ENCODE measurements at regions of chr11 and their contacts with region 1.

Region 1: GRCh38 chr11:47980245-47981049 is at the start of gene PTPRJ:
- DNase-seq: peak; percentile 65 to 68
- H3K4me3 ChIP-seq: peak within 1 kb of the TSS; percentile 66
- H3K4me3 Mint-ChIP-seq: peak within 1 kb of the TSS; percentile 63
- H3K27ac Mint-ChIP-seq: no peak within 1 kb of the TSS
- H3K4me1 ChIP-seq: peaks cover 19% of the 10 kb centered on the region
- H3K4me1 Mint-ChIP-seq: peaks cover 12% of the 10 kb centered on the region
- H3K27me3 ChIP-seq: no peaks in the 10 kb centered on the region
- H3K27me3 Mint-ChIP-seq: no peaks in the 10 kb centered on the region
- CTCF ChIP-seq: no peak
- total RNA-seq, gene PTPRJ: 9.7 and 11.0 TPM in 2 replicates

Region 2: GRCh38 chr11:47932544-47932943 is 47.9 kb before region 1 on chr11:
- CTCF ChIA-PET with region 1: interaction called, 3 read pairs
- POLR2A ChIA-PET with region 1: no interaction called
- intact Hi-C with region 1: loop called (anchors 2 kb)
- DNase-seq: no peak
- H3K4me3 ChIP-seq: no peak overlapping the region
- H3K4me3 Mint-ChIP-seq: no peak overlapping the region
- H3K27ac Mint-ChIP-seq: no peak overlapping the region
- H3K4me1 ChIP-seq: no peaks in the 10 kb centered on the region
- H3K4me1 Mint-ChIP-seq: no peaks in the 10 kb centered on the region
- H3K27me3 ChIP-seq: no peaks in the 10 kb centered on the region
- H3K27me3 Mint-ChIP-seq: no peaks in the 10 kb centered on the region
- CTCF ChIP-seq: no peak

Region 3: GRCh38 chr11:47955061-47955755 is 25.2 kb before region 1 on chr11:
- CTCF ChIA-PET with region 1: no interaction called
- POLR2A ChIA-PET with region 1: interaction called, 10 read pairs
- intact Hi-C with region 1: no loop called
- DNase-seq: no peak
- H3K4me3 ChIP-seq: no peak overlapping the region
- H3K4me3 Mint-ChIP-seq: no peak overlapping the region
- H3K27ac Mint-ChIP-seq: no peak overlapping the region
- H3K4me1 ChIP-seq: no peaks in the 10 kb centered on the region
- H3K4me1 Mint-ChIP-seq: no peaks in the 10 kb centered on the region
- H3K27me3 ChIP-seq: no peaks in the 10 kb centered on the region
- H3K27me3 Mint-ChIP-seq: no peaks in the 10 kb centered on the region
- CTCF ChIP-seq: no peak

Region 4: GRCh38 chr11:47967577-47968425 is 12.6 kb before region 1 on chr11:
- CTCF ChIA-PET with region 1: no interaction called
- POLR2A ChIA-PET with region 1: no interaction called
- intact Hi-C with region 1: no loop called
- DNase-seq: no peak
- H3K4me3 ChIP-seq: no peak overlapping the region
- H3K4me3 Mint-ChIP-seq: no peak overlapping the region
- H3K27ac Mint-ChIP-seq: no peak overlapping the region
- H3K4me1 ChIP-seq: no peaks in the 10 kb centered on the region
- H3K4me1 Mint-ChIP-seq: no peaks in the 10 kb centered on the region
- H3K27me3 ChIP-seq: no peaks in the 10 kb centered on the region; the same call in 1 of the 2 replicates
- H3K27me3 Mint-ChIP-seq: no peaks in the 10 kb centered on the region
- CTCF ChIP-seq: no peak

Region 5: DNA sequence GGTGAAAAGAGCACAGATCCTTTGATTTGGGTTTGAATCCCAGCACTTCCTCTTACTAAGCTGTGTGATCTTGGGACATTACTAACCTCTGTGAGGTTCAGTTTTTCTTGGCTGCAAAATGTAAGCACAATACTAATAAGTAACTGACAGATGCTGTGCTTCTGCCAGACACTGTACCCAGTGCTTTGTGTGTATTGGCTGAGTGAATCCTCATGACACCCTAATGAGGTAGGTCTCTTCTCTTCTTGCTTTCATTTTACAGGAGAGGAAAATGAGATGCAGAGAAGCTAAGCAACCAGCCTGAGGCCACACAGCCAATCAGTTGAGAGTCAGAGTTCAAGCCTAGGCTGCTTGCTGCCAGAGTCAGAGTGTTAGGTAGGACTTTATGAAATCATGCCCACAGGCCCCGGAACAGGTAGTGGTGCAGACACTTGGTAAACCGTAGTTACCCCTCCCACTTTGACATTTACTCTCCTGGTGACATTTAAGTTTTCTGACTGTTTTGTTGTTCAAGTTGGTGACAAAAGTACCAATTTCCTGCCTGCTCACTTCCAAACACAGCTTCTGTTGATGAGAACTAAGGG is 21.1 kb after region 1 on chr11:
- CTCF ChIA-PET with region 1: no interaction called
- POLR2A ChIA-PET with region 1: interaction called, 8 read pairs
- intact Hi-C with region 1: loop called (anchors 1 kb)
- DNase-seq: no peak
- H3K4me3 ChIP-seq: no peak overlapping the region
- H3K4me3 Mint-ChIP-seq: no peak overlapping the region
- H3K27ac Mint-ChIP-seq: no peak overlapping the region
- H3K4me1 ChIP-seq: peaks cover 35% of the 10 kb centered on the region
- H3K4me1 Mint-ChIP-seq: peaks cover 35% of the 10 kb centered on the region
- H3K27me3 ChIP-seq: no peaks in the 10 kb centered on the region
- H3K27me3 Mint-ChIP-seq: no peaks in the 10 kb centered on the region
- CTCF ChIP-seq: no peak

Region 6: DNA sequence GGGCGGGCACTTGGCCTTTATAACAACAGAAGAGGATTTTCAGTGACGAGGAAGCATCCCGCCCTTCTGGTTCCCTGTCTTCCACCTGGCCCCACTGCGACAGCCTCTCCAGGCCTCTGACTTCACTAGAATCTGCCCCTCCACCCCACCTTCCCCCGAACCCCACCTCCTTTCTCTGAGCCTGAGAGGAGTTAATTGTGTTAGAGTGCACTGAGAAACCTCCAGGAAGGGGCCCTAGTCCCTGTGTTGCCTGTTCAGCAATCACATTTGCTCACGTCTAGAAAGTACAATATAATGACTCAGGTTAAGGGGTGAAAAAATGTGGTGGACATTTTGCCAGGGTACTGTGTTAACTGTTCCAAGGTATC is 38.8 kb after region 1 on chr11:
- CTCF ChIA-PET with region 1: no interaction called
- POLR2A ChIA-PET with region 1: no interaction called
- intact Hi-C with region 1: loop called (anchors 5 kb)
- DNase-seq: no peak
- H3K4me3 ChIP-seq: no peak overlapping the region
- H3K4me3 Mint-ChIP-seq: no peak overlapping the region
- H3K27ac Mint-ChIP-seq: peak overlapping the region; percentile 78
- H3K4me1 ChIP-seq: no peaks in the 10 kb centered on the region
- H3K4me1 Mint-ChIP-seq: peaks cover 6% of the 10 kb centered on the region
- H3K27me3 ChIP-seq: no peaks in the 10 kb centered on the region
- H3K27me3 Mint-ChIP-seq: no peaks in the 10 kb centered on the region
- CTCF ChIP-seq: no peak

Region 7: GRCh38 chr11:48050313-48050703 is 69.9 kb after region 1 on chr11:
- CTCF ChIA-PET with region 1: no interaction called
- POLR2A ChIA-PET with region 1: no interaction called
- intact Hi-C with region 1: loop called (anchors 2 kb)
- DNase-seq: no peak
- H3K4me3 ChIP-seq: no peak overlapping the region
- H3K4me3 Mint-ChIP-seq: peak overlapping the region; percentile 43
- H3K27ac Mint-ChIP-seq: peak overlapping the region; percentile 55
- H3K4me1 ChIP-seq: peaks cover 39% of the 10 kb centered on the region
- H3K4me1 Mint-ChIP-seq: peaks cover 39% of the 10 kb centered on the region
- H3K27me3 ChIP-seq: no peaks in the 10 kb centered on the region
- H3K27me3 Mint-ChIP-seq: no peaks in the 10 kb centered on the region
- CTCF ChIP-seq: no peak

Region 8: DNA sequence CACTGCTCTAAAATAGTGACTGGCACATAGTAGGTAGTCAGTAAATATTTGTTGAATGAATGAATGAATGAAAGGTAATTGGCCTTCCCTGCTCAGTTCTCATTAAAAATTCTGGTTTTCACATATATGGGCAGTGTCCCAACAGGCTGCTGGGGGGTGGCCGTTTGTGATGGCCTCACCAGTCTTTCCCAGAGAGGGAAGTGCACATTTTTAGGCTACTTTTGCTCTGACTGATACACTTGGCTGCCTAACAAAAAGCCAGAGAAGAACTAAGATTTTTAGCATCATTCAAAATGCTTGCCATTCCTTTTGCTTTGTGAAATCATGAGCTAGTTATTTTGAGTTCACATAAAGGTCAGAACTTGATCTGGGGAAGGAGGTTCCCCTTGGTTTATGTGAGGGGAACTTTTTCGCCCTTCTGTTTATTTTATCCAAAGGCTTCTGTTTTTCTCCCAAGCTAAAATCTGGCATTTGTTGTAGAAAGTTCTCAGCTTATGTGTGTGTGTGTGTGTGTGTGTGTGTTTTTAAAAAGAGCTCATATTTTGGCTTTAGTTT is 83.1 kb after region 1 on chr11:
- CTCF ChIA-PET with region 1: no interaction called
- POLR2A ChIA-PET with region 1: no interaction called
- intact Hi-C with region 1: no loop called
- DNase-seq: no peak
- H3K4me3 ChIP-seq: no peak overlapping the region
- H3K4me3 Mint-ChIP-seq: no peak overlapping the region
- H3K27ac Mint-ChIP-seq: peak overlapping the region; percentile 10
- H3K4me1 ChIP-seq: peaks cover 20% of the 10 kb centered on the region
- H3K4me1 Mint-ChIP-seq: peaks cover 9% of the 10 kb centered on the region
- H3K27me3 ChIP-seq: no peaks in the 10 kb centered on the region
- H3K27me3 Mint-ChIP-seq: no peaks in the 10 kb centered on the region
- CTCF ChIP-seq: no peak

Region 9: DNA sequence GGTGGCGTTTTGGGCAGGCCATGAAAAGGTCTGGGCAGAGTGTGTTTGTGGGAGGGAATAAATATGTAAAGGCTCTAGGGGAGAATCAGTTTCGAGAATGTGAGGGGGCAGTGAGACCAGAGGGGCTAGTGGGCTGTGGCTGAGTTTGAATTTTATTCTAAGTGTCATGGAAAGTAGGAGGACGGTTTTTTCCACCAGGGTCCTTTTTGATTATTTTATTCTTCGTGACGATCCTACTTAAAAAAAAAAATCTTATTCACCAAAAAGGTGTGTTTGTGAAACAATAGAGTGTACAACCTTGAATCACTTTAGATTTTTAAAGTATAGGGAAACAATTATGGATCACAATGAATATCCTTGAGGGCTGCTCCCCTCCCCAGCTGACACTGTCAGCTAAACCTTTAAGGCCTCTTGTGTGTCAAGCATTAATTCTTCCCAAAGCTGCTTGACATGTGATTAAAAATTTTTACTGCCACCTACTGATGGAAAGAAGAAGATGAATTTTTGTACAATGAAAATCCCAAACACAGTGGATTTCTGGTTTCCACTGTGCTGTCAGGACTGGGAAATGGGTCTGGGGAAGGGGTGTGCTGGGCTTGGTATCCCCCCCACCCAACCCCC is 128.7 kb after region 1 on chr11:
- CTCF ChIA-PET with region 1: interaction called, 8 read pairs
- POLR2A ChIA-PET with region 1: no interaction called
- intact Hi-C with region 1: loop called (anchors 5 kb)
- DNase-seq: peak in 1 of 2 experiments; percentile 27
- H3K4me3 ChIP-seq: no peak overlapping the region
- H3K4me3 Mint-ChIP-seq: no peak overlapping the region
- H3K27ac Mint-ChIP-seq: no peak overlapping the region
- H3K4me1 ChIP-seq: peaks cover 11% of the 10 kb centered on the region; the same call in 1 of the 2 replicates
- H3K4me1 Mint-ChIP-seq: peaks cover 7% of the 10 kb centered on the region
- H3K27me3 ChIP-seq: no peaks in the 10 kb centered on the region
- H3K27me3 Mint-ChIP-seq: no peaks in the 10 kb centered on the region
- CTCF ChIP-seq: peak; percentile 30 to 44

Measured in Caco-2 (cell line).